ENCODE measurements at regions of chr3 and their contacts with region 1.

Region 1: DNA sequence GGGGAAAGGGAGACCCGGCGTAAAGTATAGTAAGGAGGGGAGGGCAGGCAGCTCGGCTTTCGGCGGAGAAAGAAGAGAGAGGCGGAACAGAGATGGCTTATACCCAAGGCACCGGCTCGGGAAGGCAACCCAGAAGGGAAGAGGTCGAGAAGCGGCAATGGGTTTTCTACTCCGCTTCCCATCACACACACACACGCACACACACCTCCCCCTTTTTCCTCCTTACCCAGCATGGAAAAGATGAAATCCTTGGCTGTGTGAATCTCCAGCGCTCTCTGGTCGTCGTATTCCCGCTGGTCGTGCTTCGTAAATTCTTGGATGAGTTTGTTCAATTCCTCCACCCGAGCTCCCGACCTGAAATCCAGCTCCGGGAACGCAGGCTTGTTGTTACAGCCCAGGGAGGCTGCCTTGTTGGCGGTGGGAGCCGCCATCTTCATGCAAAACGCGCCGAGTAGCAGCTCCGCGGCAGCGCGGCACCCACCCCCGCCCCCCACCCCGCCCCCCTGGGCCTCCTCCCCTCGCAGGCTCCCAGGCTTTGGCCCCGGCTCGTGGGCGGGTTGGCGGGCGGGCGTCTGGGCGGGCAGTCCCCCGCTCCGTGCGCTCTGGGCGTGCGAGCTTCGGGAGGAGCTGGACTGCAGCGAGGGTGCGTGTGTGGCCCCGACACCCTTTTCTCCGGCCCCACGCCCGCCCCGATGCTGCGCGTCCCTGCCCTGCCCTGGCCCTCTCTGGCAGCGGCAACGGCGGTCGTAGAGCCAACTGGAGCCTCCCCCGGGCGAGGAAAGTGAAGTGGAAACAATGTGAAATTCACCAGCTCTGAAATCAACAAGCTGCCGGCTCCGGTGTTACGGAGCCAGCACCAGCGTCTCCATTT is at the start of gene MB21D2:
- DNase-seq: peak; percentile 89
- H3K4me3 ChIP-seq: peak within 1 kb of the TSS; percentile 50 to 89 (median 60)
- H3K27ac ChIP-seq: peak within 1 kb of the TSS; percentile 80
- H3K4me1 ChIP-seq: peaks cover 9% of the 10 kb centered on the region
- H3K27me3 ChIP-seq: no peaks in the 10 kb centered on the region
- CTCF ChIP-seq: no peak
- POLR2A ChIP-seq: peak; percentile 66
- total RNA-seq, gene MB21D2: 7.2 and 7.4 TPM in 2 replicates

Region 2: GRCh38 chr3:192566706-192567290 is 350.8 kb before region 1 on chr3:
- CTCF ChIA-PET with region 1: no interaction called
- POLR2A ChIA-PET with region 1: no interaction called
- dilution Hi-C with region 1: no loop called
- intact Hi-C with region 1: loop called (anchors 5 kb)
- DNase-seq: peak; percentile 72
- H3K4me3 ChIP-seq: no peak overlapping the region
- H3K27ac ChIP-seq: no peak overlapping the region
- H3K4me1 ChIP-seq: no peaks in the 10 kb centered on the region
- H3K27me3 ChIP-seq: peaks cover 3 to 10% of the 10 kb centered on the region in 2 experiments
- CTCF ChIP-seq: peak; percentile 52
- POLR2A ChIP-seq: no peak

Region 3: DNA sequence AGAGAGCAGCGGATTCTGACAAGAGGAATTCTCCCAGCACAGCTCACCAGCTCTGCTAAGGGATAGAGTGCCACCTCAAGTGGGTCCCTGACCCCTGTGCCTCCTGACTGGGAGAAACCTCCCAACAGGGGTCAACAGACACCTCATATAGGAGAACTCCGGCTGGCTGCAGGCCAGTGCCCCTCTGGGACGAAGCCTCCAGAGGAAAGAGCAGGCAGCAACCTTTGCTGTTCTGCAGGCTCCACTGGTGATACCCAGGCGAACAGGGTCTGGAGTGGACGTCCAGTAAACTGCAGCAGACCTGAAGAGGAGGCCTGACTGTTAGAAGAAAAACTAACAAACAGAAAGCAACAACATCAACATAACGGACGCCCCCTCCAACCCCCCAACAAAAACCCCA is 159.0 kb before region 1 on chr3:
- CTCF ChIA-PET with region 1: no interaction called
- POLR2A ChIA-PET with region 1: no interaction called
- dilution Hi-C with region 1: no loop called
- intact Hi-C with region 1: no loop called
- DNase-seq: no peak
- H3K4me3 ChIP-seq: no peak overlapping the region
- H3K27ac ChIP-seq: no peak overlapping the region
- H3K4me1 ChIP-seq: no peaks in the 10 kb centered on the region
- H3K27me3 ChIP-seq: no peaks in the 10 kb centered on the region
- CTCF ChIP-seq: no peak
- POLR2A ChIP-seq: no peak

Region 4: GRCh38 chr3:192879336-192880106 is 38.1 kb before region 1 on chr3:
- CTCF ChIA-PET with region 1: interaction called, 9 read pairs
- POLR2A ChIA-PET with region 1: interaction called, 6 read pairs
- dilution Hi-C with region 1: no loop called
- intact Hi-C with region 1: loop called (anchors 5 kb)
- DNase-seq: peak; percentile 63
- H3K4me3 ChIP-seq: no peak overlapping the region
- H3K27ac ChIP-seq: no peak overlapping the region
- H3K4me1 ChIP-seq: peaks cover 43% of the 10 kb centered on the region
- H3K27me3 ChIP-seq: no peaks in the 10 kb centered on the region
- CTCF ChIP-seq: no peak
- POLR2A ChIP-seq: no peak

Region 5: GRCh38 chr3:192957441-192958021 is 39.9 kb after region 1 on chr3:
- CTCF ChIA-PET with region 1: interaction called, 4 read pairs
- POLR2A ChIA-PET with region 1: no interaction called
- dilution Hi-C with region 1: no loop called
- intact Hi-C with region 1: loop called (anchors 1 kb)
- DNase-seq: peak; percentile 90
- H3K4me3 ChIP-seq: peak overlapping the region in 1 of 3 experiments; percentile 24
- H3K27ac ChIP-seq: peak overlapping the region; percentile 92
- H3K4me1 ChIP-seq: peaks cover 21% of the 10 kb centered on the region
- H3K27me3 ChIP-seq: no peaks in the 10 kb centered on the region
- CTCF ChIP-seq: no peak
- POLR2A ChIP-seq: no peak

Region 6: DNA sequence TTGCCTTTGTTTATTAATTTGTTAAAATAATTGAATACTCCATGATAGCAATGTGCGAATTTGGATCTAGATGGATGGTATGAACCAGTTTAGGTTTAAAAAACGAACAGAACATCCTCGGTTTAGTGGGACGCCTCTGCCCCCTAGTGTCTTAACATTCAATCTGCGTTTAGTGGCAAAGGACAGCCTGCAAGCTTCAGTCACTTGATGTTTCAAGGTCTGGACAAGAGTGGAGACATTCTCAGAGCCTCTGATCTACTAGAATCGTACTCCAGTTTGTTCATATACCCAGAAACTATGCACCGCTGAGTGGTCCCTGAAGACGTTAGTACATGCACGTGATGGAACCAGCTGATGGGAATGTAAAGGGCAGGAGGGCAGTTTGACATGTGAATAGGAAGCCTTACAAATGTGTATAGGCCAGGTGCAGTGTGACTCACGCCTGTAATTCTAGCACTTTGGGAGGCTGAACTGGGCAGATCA is 654.8 kb after region 1 on chr3:
- CTCF ChIA-PET with region 1: interaction called, 5 read pairs
- POLR2A ChIA-PET with region 1: no interaction called
- dilution Hi-C with region 1: no loop called
- intact Hi-C with region 1: loop called (anchors 2 kb)
- DNase-seq: peak; percentile 69
- H3K4me3 ChIP-seq: no peak overlapping the region
- H3K27ac ChIP-seq: no peak overlapping the region
- H3K4me1 ChIP-seq: no peaks in the 10 kb centered on the region
- H3K27me3 ChIP-seq: peaks cover 1 to 3% of the 10 kb centered on the region in 2 experiments
- CTCF ChIP-seq: peak; percentile 76 to 77
- POLR2A ChIP-seq: no peak